ENCODE measurements at regions of chr3 and their contacts with region 1.

Region 1: DNA sequence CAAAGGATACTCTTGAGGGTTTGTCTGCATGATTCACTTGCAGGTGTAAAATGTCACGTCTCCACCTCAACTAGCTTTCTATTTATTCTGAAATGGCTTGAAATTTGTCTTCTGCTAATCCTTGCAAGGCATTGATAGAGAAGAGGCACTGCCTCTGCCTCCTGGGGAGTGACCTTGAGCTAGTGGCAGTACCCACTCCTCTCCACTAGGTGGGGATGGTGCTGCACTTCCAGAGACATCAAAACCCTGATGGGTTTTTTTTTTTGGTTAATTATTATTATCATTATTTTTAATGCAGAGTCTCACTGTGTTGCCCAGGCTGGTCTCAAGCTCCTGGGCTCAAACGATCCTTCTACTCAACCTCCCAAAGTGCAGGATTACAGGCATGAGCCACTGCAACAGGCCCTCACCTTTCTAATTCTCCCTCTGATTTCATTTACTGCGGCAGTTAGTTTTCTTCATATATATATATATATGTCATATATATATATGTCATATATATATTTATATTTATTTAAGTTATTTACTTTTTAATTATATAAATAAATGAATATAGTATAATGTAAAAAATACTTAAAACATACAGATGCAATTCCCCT is 117.6 kb upstream of the EIF1B start:
- DNase-seq: no peak
- H3K4me3 ChIP-seq: no peak overlapping the region
- H3K27me3 ChIP-seq: no peaks in the 10 kb centered on the region
- CTCF ChIP-seq: peak; percentile 93

Region 2: DNA sequence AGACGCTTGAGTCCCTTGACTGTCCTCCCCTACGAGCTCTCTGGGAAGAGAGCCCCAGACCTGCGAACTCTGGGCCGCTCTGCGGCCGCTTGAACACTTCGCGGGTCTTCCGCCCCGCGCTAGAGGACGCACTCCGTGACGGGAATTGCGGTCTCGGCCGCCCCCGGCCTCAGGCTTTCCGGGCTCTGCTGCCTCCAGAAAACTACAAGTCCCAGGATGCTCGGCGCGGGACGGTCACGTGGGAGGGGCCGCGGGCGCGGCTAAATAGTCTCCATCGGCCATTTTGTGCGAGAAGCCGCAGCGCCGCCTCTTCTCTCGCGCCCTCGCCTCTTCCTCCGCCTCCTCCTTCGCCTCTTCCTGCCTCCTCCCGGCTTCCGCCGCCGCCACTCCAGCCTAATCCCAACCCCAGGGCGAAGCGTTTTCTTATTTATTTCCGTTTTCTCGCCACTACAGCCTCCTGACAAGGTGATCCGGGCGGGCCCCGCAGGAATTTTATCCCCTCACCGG is 117.5 kb after region 1 on chr3 and contains the start of gene EIF1B:
- CTCF ChIA-PET with region 1: interaction called, 245 read pairs
- POLR2A ChIA-PET with region 1: no interaction called
- DNase-seq: peak; percentile 81
- H3K4me3 ChIP-seq: peak within 1 kb of the TSS; percentile 94
- H3K27me3 ChIP-seq: no peaks in the 10 kb centered on the region
- CTCF ChIP-seq: peak; percentile 97
- polyA plus RNA-seq, gene EIF1B: 18.6 and 38.9 TPM in 2 replicates

Region 3: DNA sequence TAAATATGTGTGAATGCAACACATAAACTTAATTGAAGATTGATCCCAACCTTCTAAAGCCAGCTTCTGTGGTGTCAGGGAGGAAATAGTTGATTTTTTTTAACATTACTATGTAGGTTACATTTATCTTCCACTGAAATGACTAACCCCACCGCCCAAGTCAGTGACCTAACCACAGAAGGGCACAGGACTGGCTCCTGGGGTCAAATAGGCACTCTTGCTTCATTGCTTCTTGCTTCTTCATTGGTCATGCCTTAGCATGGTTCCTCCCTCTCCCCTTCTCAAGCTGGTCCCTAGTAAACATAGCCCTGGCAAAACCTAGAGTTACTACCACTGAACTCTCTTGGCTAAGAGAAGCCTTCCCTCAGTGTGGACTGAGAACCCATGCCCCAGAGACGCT is 129.9 kb after region 1 on chr3:
- CTCF ChIA-PET with region 1: interaction called, 245 read pairs
- POLR2A ChIA-PET with region 1: no interaction called
- DNase-seq: no peak
- H3K4me3 ChIP-seq: no peak overlapping the region
- H3K27me3 ChIP-seq: 0 out of 2 replicates have a peak, but pooled peaks cover 3% of the 10 kb centered on the region
- CTCF ChIP-seq: no peak